Psoas muscle (tissue), 8 donors: ENCODE measurements at regions of chr3 and their contacts with region 1.

Region 1: DNA sequence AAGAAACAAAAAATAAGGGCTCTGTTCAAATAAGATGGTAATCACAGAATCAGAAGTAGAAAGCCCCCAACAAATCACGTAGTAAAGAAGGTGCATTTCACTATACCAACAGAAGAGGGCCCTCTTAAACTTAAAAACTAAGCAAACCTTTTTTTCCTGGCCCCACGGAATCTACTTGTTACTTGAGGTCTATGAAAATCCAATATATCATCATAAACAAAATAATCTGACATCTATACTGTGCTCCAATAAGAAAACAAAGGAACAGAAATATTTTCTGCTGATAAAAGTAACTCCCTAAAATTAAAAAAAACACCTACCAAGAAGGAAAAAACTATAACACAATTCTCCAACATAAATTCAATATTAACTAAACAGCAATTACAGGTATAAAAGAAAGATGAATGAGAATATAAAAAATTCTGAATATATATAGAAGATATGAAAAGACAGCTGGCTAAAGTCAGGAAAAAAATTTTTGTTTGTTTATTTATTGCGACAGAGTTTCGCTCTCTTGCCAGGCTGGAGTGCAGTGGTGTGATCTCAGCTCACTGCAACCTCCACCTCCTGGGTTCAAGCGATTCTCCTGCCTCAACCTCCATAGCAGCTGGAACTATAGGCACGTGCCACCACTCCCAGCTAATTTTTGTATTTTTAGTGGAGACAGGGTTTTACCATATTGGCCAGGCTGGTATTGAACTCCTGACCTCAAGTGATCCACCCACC is 81.8 kb downstream of the CLASP2 start:
- DNase-seq: no peak
- ATAC-seq: peak in 3 of 4 donors; percentile 48 to 86 (median 65)
- H3K4me3 ChIP-seq: no peak overlapping the region
- H3K27ac ChIP-seq: no peak overlapping the region
- H3K4me1 ChIP-seq: no peaks in the 10 kb centered on the region
- H3K27me3 ChIP-seq: no peaks in the 10 kb centered on the region
- CTCF ChIP-seq: peak; percentile 66

Region 2: DNA sequence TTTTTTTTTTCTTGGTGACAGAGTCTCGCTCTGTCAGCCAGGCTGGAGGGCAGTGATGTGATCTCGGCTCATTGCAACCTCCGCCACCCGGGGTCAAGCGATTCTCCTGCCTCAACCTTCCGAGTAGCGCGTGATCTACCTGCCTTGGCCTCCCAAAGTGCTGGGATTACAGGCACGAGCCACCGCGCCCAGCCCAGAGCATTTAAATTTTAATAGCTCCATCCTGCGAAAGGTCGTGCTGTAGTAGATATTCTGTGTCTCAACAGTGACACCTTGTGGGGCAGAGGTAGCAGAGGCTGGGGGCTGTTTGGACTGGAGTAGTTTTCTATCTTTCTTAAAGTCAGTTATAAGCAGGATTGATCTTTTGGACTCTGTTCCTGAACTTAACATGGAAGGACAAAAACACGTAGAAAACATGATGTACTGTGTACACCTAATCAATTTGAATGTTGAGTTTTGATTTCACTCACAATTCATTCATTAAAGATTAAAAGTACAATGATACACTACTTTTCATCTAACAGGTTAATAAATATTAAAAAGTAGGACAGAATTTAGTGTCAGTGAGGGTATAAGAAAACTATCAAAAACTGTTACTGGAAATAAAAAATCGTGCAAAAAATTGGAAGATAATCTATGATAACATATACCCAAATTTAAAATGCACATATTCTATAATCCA is 151.2 kb after region 1 on chr3:
- intact Hi-C with region 1: loop called (anchors 1 to 5 kb)
- DNase-seq: peak in 1 of 2 donors; percentile 31
- ATAC-seq: peak; percentile 71 to 96 (median 88)
- H3K4me3 ChIP-seq: peak overlapping the region; percentile 4
- H3K27ac ChIP-seq: no peak overlapping the region
- H3K4me1 ChIP-seq: no peaks in the 10 kb centered on the region
- H3K27me3 ChIP-seq: no peaks in the 10 kb centered on the region
- CTCF ChIP-seq: peak; percentile 76

Region 3: GRCh38 chr3:33840179-33840578 is 203.9 kb after region 1 on chr3:
- intact Hi-C with region 1: no loop called
- DNase-seq: no peak
- ATAC-seq: no peak
- H3K4me3 ChIP-seq: no peak overlapping the region
- H3K27ac ChIP-seq: no peak overlapping the region
- H3K4me1 ChIP-seq: no peaks in the 10 kb centered on the region
- H3K27me3 ChIP-seq: no peaks in the 10 kb centered on the region
- CTCF ChIP-seq: no peak